RWPE1 (cell line): ENCODE measurements at regions of chr15 and their contacts with region 1.

Region 1: DNA sequence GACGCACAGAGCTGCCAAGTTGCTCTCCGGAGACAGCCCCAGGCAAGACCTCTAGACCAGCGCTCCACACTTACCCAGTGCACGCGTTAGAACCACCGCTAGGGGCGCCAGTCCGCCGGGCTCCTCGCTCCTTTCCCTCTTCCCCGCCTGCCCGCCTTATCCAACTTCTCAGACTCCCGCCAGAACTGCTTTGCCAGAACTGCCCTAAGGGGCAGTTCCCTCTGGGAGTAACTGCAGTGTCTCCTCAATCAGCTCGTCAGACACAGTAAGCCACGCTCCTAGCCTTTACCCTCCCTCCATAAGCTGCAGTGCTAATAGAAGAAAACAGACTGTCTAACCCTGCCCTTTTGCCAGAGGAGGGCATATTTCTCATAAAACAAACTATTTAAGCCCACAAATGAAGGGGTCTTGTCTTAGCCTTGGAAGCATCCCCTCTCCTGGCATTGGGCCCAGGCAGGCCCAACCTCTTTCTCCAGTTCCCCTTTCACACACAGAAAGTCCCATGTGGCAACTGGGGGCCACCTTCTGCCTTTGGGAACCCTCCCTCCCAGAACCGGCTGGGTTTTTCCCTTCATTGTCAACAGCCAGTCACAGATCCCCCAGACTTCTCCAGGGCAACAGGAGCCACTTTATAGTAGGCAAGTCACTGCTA is 3.7 kb downstream of the BMF start:
- DNase-seq: peak; percentile 89
- H3K27ac ChIP-seq: peak overlapping the region; percentile 94
- CTCF ChIP-seq: peak; percentile 99

Region 2: GRCh38 chr15:40038638-40039543 is 66.1 kb before region 1 on chr15 and contains the start of gene SRP14:
- CTCF ChIA-PET with region 1: interaction called, 20 read pairs
- POLR2A ChIA-PET with region 1: no interaction called
- DNase-seq: peak; percentile 95
- H3K27ac ChIP-seq: peak within 1 kb of the TSS; percentile 91
- CTCF ChIP-seq: no peak

Region 3: DNA sequence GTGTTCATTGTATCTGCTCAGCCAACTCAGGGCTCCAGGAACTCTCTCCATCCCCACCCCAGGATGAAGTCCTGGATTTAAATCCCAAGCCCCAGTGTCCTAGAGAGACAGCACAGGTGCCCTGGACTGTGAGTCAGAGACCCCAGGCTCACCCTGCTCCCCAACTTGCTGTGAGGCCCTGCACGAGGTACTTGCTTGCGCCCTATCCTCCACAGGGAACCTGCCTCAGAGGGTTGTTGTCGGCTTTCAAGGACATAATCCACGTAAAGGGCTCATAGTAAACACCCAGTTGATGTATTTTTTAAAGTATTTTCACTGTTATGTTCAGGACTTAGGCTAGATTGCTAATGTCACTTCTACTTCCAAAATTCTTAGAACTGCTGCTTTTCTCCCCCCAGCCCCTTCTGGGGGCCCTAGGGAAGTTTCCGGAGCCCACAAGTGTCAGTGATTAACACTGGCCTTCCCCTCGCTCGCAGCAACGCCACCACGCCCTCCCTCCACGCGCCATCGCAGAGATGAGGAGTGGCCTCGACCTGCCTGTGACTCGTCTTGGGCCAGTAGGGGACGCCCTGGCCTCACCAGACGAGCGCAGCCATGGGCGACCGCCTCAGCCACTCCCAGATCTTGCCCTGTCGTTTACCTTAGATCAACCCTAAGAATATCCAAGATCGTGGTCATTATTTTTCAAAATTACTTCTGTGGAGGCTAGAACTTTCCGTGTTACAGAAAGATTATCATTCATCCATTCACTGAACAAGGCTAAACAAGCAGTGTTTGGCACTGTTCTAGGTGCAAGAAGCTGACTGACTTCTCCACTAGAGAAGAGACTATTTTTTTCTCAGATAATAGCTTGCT is 60.0 kb before region 1 on chr15:
- CTCF ChIA-PET with region 1: interaction called, 23 read pairs
- POLR2A ChIA-PET with region 1: interaction called, 4 read pairs
- DNase-seq: peak; percentile 86
- H3K27ac ChIP-seq: peak overlapping the region; percentile 61
- CTCF ChIP-seq: peak; percentile 100

Region 4: DNA sequence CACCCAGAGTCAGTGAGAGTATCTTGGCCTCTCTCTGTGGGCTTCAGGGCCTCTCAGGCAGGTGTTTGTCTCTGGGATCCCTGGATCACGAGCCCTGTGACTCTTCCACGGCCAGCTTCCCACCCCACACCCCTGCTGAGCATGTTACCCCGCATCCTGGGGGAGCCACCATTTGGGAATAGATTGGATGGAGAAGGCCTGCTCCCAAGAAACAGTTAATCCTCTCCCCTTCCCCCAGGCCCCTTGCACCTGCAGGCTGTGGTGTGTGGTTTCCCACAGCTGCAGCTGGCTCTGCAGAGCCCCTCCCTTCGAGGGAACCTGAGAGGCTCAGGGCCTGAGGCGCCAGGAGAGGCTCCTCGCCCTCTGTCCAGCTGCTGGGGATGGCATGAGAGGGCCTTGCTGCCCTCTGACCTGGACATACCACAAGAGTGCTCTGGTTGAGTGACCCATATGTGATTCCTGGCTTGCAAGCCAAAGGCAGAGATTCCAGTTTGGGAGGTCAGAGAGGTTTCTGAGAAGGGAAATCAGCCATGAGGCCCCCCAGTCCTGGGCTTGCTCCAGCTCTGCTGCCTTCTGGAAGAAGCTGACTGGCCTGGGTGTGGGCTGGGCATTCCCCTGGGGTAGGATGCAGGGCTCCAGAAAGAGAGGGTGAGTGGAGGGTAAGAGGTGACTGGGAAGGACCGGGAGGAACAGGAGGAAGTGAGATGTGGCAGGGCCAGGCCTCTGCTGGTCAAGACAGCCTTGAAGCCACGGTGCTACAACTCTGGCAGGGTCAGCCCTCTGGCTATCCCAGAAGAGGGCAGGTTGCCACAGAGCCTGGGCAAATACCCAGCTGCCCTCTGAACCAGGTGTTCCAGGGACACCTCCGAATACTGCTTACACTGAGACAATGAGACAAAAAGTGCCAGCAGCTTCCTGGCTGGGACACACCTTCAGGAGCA is 50.1 kb before region 1 on chr15:
- CTCF ChIA-PET with region 1: interaction called, 10 read pairs
- POLR2A ChIA-PET with region 1: no interaction called
- DNase-seq: no peak
- H3K27ac ChIP-seq: peak overlapping the region; percentile 77
- CTCF ChIP-seq: no peak

Region 5: DNA sequence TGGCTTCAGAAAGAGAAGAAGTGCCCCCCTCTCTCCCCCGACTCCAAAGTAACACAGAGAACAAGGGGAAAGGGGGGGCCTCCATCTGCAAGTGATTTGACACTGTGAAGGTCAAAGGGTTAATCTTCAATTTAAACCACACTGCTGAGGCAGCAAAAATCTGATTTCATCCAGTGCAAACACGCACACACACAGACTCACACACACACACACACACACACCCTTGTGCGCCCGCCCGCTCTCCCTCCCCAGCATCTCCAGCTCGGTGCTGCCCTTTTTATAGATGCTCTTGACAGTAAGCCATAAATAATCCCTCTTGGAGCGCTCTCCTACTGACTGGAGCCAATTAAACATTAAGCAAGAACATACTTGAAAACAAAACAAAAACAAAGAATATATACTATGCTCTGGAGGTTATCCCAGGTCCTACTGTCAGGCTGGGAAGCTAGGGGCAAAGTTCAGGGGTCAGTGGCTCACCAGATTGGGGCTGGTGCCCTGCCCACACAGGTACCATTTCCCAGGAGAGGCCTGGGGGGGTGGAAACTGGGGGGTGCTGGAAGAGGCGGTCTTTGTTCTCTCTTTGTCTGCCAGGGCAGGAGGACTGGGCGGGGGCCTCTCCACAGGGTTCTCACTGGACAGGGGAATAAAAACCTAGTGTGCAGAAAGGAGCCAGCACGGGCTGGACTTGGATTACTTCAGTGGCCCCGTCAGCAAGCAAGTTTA is 12.6 kb before region 1 on chr15:
- CTCF ChIA-PET with region 1: interaction called, 10 read pairs
- POLR2A ChIA-PET with region 1: interaction called, 6 read pairs
- DNase-seq: no peak
- H3K27ac ChIP-seq: peak overlapping the region; percentile 92
- CTCF ChIP-seq: no peak

Region 6: DNA sequence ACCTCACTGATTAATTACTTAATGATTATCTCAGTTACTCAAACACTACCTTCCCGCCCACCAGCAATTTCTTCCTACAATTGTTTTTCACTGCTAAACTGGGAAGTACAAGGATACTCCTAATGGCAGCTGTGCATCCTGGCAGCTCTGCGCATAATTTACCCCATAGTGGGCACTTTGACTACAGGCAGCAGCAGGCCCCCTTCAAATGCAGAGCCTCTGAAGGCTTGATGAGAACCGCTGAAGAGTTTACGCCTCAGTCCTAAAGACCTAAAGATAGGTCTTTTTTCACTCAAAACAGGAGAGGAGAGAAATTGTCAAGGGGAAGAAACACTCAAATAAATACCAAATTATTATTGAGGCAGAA is 449.2 kb after region 1 on chr15:
- CTCF ChIA-PET with region 1: no interaction called
- POLR2A ChIA-PET with region 1: no interaction called
- DNase-seq: no peak
- H3K27ac ChIP-seq: no peak overlapping the region
- CTCF ChIP-seq: no peak